ENCODE measurements at regions of chr12 and their contacts with region 1.

Region 1: DNA sequence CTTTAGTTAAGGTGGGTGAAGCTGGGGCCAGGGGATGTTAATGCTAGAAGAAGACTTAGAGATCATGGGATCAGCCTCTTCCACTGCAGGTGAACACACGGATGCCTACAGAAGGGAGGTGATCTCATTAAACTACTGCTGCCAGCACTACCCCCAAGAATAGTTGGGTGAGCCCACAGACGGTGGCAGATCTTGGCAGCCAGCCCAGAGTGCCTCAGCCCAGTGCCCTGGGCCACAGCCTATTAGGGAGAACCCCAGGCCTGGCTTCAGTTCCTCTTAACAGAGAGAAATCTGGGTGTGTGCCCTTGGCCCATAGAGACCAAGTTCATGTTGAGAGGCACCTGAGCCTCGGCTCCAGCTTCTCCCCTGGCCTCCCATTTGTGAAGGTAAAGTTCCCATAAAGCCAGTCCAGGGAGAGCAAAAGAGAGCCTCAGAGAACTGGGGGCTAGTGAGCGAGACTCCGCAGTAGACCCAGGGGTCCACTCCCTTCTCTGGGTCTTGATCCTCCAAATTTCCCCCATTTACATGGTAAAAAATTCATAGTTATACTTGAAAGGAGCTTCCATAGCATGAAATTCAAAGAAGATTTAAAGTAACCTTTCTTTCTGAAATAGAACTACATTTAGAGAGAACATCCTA is 125.0 kb upstream of the CCND2 start:
- DNase-seq: peak; percentile 93
- ATAC-seq: peak; percentile 72
- H3K4me3 ChIP-seq: no peak overlapping the region
- H3K27ac ChIP-seq: peak overlapping the region; percentile 72
- H3K4me1 ChIP-seq: peaks cover 77% of the 10 kb centered on the region
- H3K27me3 ChIP-seq: no peaks in the 10 kb centered on the region
- CTCF ChIP-seq: no peak
- EP300 ChIP-seq: peak in 1 of 2 experiments; percentile 74; a peak in 1 of 4 replicates
- POLR2A ChIP-seq: no peak
- RAD21 ChIP-seq: no peak

Region 2: DNA sequence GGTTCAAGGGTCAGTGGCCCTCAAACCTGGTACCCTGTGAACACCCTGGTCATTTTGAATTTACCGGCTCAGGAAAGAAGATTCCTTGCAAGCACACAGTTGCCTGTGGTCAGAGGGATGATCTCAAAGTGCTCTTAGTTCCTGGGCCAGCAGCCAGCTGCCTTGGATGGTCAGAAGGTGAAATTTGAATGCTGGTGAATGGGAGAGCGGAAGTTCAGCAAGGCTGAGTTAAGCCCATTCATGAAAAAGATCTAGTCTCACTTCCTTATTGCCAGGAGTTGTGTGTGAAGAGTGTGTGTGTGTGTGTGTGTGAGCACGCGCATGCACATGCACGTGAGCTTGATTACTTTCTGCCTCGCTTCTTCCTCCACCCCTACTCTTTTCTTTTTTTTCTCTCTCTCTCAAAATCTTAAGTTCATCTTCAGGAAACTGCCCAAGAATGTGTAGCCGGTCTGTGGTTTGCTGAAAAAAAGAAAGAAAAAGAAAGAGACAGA is 30.5 kb before region 1 on chr12:
- CTCF ChIA-PET with region 1: interaction called, 256 read pairs
- POLR2A ChIA-PET with region 1: interaction called, 245 read pairs
- RAD21 ChIA-PET with region 1: interaction called, 360 read pairs
- SMC1A ChIA-PET with region 1: interaction called, 395 read pairs
- in situ Hi-C with region 1: no loop called
- intact Hi-C with region 1: loop called (anchors 1 kb)
- DNase-seq: peak; percentile 89
- ATAC-seq: peak; percentile 54
- H3K4me3 ChIP-seq: peak overlapping the region; percentile 56
- H3K27ac ChIP-seq: peak overlapping the region; percentile 95
- H3K4me1 ChIP-seq: peaks cover 50% of the 10 kb centered on the region
- H3K27me3 ChIP-seq: no peaks in the 10 kb centered on the region
- CTCF ChIP-seq: no peak
- EP300 ChIP-seq: peak; percentile 83 to 94; a peak in 3 of 4 replicates
- POLR2A ChIP-seq: no peak
- RAD21 ChIP-seq: no peak

Region 3: GRCh38 chr12:4135919-4136605 is 12.5 kb before region 1 on chr12:
- CTCF ChIA-PET with region 1: interaction called, 35 read pairs
- POLR2A ChIA-PET with region 1: interaction called, 84 read pairs
- RAD21 ChIA-PET with region 1: interaction called, 35 read pairs
- SMC1A ChIA-PET with region 1: interaction called, 85 read pairs
- in situ Hi-C with region 1: no loop called
- intact Hi-C with region 1: loop called (anchors 2 kb)
- DNase-seq: peak; percentile 94
- ATAC-seq: peak; percentile 88
- H3K4me3 ChIP-seq: peak overlapping the region; percentile 55; the same call in 1 of the 2 replicates
- H3K27ac ChIP-seq: peak overlapping the region; percentile 64
- H3K4me1 ChIP-seq: peaks cover 65% of the 10 kb centered on the region
- H3K27me3 ChIP-seq: no peaks in the 10 kb centered on the region
- CTCF ChIP-seq: no peak
- EP300 ChIP-seq: peak; percentile 85 to 87; a peak in 3 of 4 replicates
- POLR2A ChIP-seq: no peak
- RAD21 ChIP-seq: no peak

Region 4: GRCh38 chr12:4164559-4165558 is 16.3 kb after region 1 on chr12:
- CTCF ChIA-PET with region 1: interaction called, 18 read pairs
- POLR2A ChIA-PET with region 1: interaction called, 33 read pairs
- RAD21 ChIA-PET with region 1: interaction called, 16 read pairs
- SMC1A ChIA-PET with region 1: interaction called, 67 read pairs
- in situ Hi-C with region 1: no loop called
- intact Hi-C with region 1: no loop called
- DNase-seq: no peak
- ATAC-seq: peak; percentile 92
- H3K4me3 ChIP-seq: peak overlapping the region; percentile 55; the same call in 1 of the 2 replicates
- H3K27ac ChIP-seq: peak overlapping the region; percentile 59
- H3K4me1 ChIP-seq: peaks cover 21% of the 10 kb centered on the region
- H3K27me3 ChIP-seq: no peaks in the 10 kb centered on the region
- CTCF ChIP-seq: no peak
- EP300 ChIP-seq: no peak
- POLR2A ChIP-seq: peak; percentile 82
- RAD21 ChIP-seq: no peak

Region 5: GRCh38 chr12:4174417-4174816 is 25.9 kb after region 1 on chr12:
- CTCF ChIA-PET with region 1: no interaction called
- POLR2A ChIA-PET with region 1: interaction called, 4 read pairs
- RAD21 ChIA-PET with region 1: interaction called, 10 read pairs
- SMC1A ChIA-PET with region 1: interaction called, 12 read pairs
- in situ Hi-C with region 1: no loop called
- intact Hi-C with region 1: no loop called
- DNase-seq: no peak
- ATAC-seq: no peak
- H3K4me3 ChIP-seq: no peak overlapping the region
- H3K27ac ChIP-seq: no peak overlapping the region
- H3K4me1 ChIP-seq: peaks cover 19% of the 10 kb centered on the region; the same call in 1 of the 2 replicates
- H3K27me3 ChIP-seq: no peaks in the 10 kb centered on the region
- CTCF ChIP-seq: no peak
- EP300 ChIP-seq: no peak
- POLR2A ChIP-seq: no peak
- RAD21 ChIP-seq: no peak

Region 6: DNA sequence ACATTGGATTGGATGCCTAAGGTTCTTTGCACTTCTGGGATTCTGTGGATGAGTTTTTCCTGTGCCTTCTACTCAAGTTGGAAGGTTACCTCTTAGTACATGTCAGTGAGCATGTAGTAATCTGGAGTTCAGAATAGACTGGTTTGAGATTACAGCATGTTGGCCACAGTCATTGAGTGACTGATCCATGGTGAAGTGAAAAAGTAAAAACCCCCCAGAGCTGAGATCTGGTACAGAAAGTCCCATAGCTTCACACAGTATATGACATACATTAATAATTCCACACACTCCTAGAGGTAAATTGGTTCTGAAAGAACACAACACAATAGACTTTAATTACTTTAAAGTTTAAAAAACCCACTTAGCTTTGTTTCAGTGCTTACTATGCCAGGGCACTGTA is 113.1 kb after region 1 on chr12:
- CTCF ChIA-PET with region 1: interaction called, 181 read pairs
- POLR2A ChIA-PET with region 1: interaction called, 19 read pairs
- RAD21 ChIA-PET with region 1: interaction called, 171 read pairs
- SMC1A ChIA-PET with region 1: interaction called, 344 read pairs
- in situ Hi-C with region 1: no loop called
- intact Hi-C with region 1: no loop called
- DNase-seq: peak; percentile 64
- ATAC-seq: peak; percentile 96
- H3K4me3 ChIP-seq: no peak overlapping the region
- H3K27ac ChIP-seq: peak overlapping the region; percentile 80
- H3K4me1 ChIP-seq: peaks cover 15% of the 10 kb centered on the region
- H3K27me3 ChIP-seq: no peaks in the 10 kb centered on the region
- CTCF ChIP-seq: no peak
- EP300 ChIP-seq: no peak
- POLR2A ChIP-seq: no peak
- RAD21 ChIP-seq: no peak

Region 7: DNA sequence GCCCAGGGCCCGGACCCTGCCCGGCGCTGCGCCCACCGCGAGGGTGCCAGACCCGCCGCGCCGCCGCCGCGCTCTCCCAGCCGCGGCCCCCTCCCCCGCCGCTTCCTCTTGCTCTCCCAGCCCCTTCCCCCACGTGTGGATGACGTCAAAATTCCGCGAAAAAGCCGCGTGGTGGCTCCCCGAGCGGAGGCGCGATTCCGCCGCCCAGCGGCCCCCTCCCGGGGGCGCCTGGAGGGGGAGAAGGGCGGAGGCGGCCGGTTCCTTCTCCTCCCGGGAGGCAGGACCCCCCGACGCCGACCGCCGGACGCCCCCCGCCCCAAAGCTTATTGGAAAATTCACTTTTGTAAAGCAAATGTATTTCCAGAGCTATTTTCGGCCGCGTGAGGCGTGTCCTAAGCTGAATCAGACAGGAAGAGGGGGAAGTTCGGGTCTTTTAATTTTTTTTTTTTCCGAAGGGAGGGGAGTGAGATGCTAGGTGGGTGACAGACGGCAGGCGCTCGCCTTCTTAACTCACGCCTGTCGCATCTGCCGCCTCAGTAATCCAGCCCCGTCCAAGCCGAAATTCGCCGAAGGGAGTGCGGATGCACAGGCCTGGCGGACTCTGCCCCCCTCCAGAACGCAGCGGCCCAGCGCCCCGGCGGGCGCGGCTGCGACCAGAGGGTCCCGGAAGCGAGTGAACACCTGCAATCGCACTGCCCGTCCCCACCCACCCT is 120.9 kb after region 1 on chr12:
- CTCF ChIA-PET with region 1: interaction called, 181 read pairs
- POLR2A ChIA-PET with region 1: interaction called, 180 read pairs
- RAD21 ChIA-PET with region 1: interaction called, 171 read pairs
- SMC1A ChIA-PET with region 1: interaction called, 344 read pairs
- in situ Hi-C with region 1: loop called (anchors 10 kb)
- intact Hi-C with region 1: loop called (anchors 2 kb)
- DNase-seq: no peak
- ATAC-seq: peak; percentile 22
- H3K4me3 ChIP-seq: peak overlapping the region; percentile 70
- H3K27ac ChIP-seq: peak overlapping the region; percentile 68
- H3K4me1 ChIP-seq: peaks cover 17% of the 10 kb centered on the region
- H3K27me3 ChIP-seq: no peaks in the 10 kb centered on the region; a peak in 1 of 4 replicates
- CTCF ChIP-seq: peak; percentile 20 to 59 (median 33); a peak in 5 of 6 replicates
- EP300 ChIP-seq: peak in 1 of 2 experiments; percentile 75; a peak in 2 of 4 replicates
- POLR2A ChIP-seq: 0 out of 2 replicates have a peak, but pooled peaks have one; percentile 22
- RAD21 ChIP-seq: peak; percentile 46

Measured in GM12878 (cell line).